ENCODE measurements at regions of chr4 and their contacts with region 1.

Region 1: GRCh38 chr4:115945026-115945425 is 831.6 kb upstream of the NDST4 start:
- DNase-seq: no peak
- ATAC-seq: no peak
- H3K4me3 ChIP-seq: no peak overlapping the region
- H3K27ac ChIP-seq: no peak overlapping the region
- H3K4me1 ChIP-seq: no peaks in the 10 kb centered on the region
- H3K27me3 ChIP-seq: no peaks in the 10 kb centered on the region
- CTCF ChIP-seq: no peak
- POLR2A ChIP-seq: no peak
- RAD21 ChIP-seq: no peak

Region 2: GRCh38 chr4:115126491-115126890 is 818.5 kb before region 1 on chr4:
- CTCF ChIA-PET with region 1: no interaction called
- POLR2A ChIA-PET with region 1: no interaction called
- dilution Hi-C with region 1: no loop called
- in situ Hi-C with region 1: no loop called
- intact Hi-C with region 1: no loop called
- DNase-seq: no peak
- ATAC-seq: no peak
- H3K4me3 ChIP-seq: no peak overlapping the region
- H3K27ac ChIP-seq: no peak overlapping the region
- H3K4me1 ChIP-seq: no peaks in the 10 kb centered on the region
- H3K27me3 ChIP-seq: no peaks in the 10 kb centered on the region
- CTCF ChIP-seq: no peak
- POLR2A ChIP-seq: no peak
- RAD21 ChIP-seq: no peak

Region 3: DNA sequence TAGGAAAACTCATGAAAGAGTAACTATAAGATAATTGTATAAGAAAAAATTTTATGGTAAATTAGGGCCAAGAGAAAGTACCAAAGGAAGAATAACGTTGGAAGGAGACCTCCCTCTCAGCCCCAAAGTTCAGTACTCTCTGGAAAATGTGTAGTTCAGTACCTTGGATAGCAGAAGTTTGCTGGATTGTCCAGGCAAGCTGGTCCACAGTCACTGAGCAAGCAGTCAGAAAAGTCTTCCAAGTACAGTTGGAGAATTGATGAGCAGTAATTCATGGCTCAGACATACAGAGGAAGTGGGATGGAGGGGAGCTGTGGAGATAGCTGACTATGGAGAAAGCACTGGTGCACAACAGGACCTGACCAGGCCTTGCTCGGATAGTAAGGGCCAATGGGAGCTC is 233.5 kb before region 1 on chr4:
- CTCF ChIA-PET with region 1: no interaction called
- POLR2A ChIA-PET with region 1: interaction called, 15 read pairs
- dilution Hi-C with region 1: no loop called
- in situ Hi-C with region 1: no loop called
- intact Hi-C with region 1: no loop called
- DNase-seq: no peak
- ATAC-seq: no peak
- H3K4me3 ChIP-seq: no peak overlapping the region
- H3K27ac ChIP-seq: no peak overlapping the region
- H3K4me1 ChIP-seq: no peaks in the 10 kb centered on the region
- H3K27me3 ChIP-seq: no peaks in the 10 kb centered on the region
- CTCF ChIP-seq: no peak
- POLR2A ChIP-seq: no peak
- RAD21 ChIP-seq: no peak